Adrenal gland (tissue), 19 donors: ENCODE measurements at regions of chr12 and their contacts with region 1.

Region 1: DNA sequence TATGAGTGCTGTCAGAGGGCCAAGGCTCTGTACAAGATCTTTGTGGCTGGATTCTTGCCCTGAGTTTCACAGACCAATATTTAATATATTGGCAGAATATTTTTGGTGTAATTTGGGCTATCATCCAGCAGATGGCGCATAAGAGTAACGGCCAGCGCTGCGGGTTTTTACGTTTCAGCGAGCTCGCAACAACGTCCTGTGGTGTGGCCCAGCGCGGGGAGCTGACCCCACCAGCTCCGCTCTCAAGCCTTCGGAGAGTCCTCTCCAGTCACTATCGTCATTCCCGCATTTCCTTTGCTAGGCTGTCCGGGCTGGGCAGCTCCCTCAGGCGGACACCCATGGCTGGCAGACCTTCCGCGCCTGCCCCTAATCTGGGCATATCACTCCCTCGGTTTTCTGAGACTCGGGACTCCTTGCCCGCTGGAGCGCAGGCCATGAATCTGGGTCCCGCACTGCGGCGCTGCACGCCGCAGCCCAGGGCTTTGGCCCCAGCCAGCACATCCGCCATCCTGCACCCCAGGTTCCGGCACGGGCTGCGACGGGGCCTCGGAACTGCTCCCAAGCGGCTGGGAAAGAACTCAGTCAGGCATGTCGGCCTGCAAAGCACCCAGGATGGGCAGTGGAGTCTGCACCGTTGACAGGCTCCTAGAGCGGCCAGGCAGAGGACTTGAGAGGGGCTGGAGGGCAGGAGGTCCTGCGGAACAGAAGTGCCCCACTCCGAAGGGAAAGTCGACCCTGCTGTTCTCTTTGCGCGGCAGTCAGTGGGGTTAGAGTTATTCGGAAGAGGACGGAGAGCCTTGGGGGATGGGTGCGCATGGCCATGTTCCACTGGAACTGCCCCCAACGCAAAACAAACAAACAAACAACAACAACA is 18.4 kb downstream of the OLR1 start:
- DNase-seq: peak; percentile 61 to 87 (median 75)
- H3K4me3 ChIP-seq: peak overlapping the region; percentile 6 to 81 (median 17)
- H3K27ac ChIP-seq: peak overlapping the region; percentile 23 to 91 (median 48)
- H3K4me1 ChIP-seq: peaks cover 0 to 4% of the 10 kb centered on the region in 2 donors
- H3K27me3 ChIP-seq: no peaks in the 10 kb centered on the region
- CTCF ChIP-seq: peak; percentile 65 to 87 (median 82)
- POLR2A ChIP-seq: peak in 1 of 2 donors; percentile 50

Region 2: GRCh38 chr12:10190558-10191388 is 37.3 kb after region 1 on chr12:
- intact Hi-C with region 1: loop called in 1 of 2 experiments (anchors 5 kb)
- DNase-seq: peak; percentile 46 to 84 (median 68)
- H3K4me3 ChIP-seq: no peak overlapping the region
- H3K27ac ChIP-seq: no peak overlapping the region
- H3K4me1 ChIP-seq: no peaks in the 10 kb centered on the region
- H3K27me3 ChIP-seq: no peaks in the 10 kb centered on the region
- CTCF ChIP-seq: peak; percentile 58 to 84 (median 75)
- POLR2A ChIP-seq: no peak